ENCODE measurements at regions of chr1 and their contacts with region 1.

Region 1: GRCh38 chr1:172753964-172754363 is 95.1 kb downstream of the FASLG start:
- DNase-seq: no peak
- ATAC-seq: no peak
- H3K4me3 ChIP-seq: no peak overlapping the region
- H3K27ac ChIP-seq: no peak overlapping the region
- H3K4me1 ChIP-seq: no peaks in the 10 kb centered on the region
- H3K27me3 ChIP-seq: peaks cover 13% of the 10 kb centered on the region; the same call in 1 of the 2 replicates
- CTCF ChIP-seq: no peak
- POLR2A ChIP-seq: no peak
- RAD21 ChIP-seq: no peak

Region 2: DNA sequence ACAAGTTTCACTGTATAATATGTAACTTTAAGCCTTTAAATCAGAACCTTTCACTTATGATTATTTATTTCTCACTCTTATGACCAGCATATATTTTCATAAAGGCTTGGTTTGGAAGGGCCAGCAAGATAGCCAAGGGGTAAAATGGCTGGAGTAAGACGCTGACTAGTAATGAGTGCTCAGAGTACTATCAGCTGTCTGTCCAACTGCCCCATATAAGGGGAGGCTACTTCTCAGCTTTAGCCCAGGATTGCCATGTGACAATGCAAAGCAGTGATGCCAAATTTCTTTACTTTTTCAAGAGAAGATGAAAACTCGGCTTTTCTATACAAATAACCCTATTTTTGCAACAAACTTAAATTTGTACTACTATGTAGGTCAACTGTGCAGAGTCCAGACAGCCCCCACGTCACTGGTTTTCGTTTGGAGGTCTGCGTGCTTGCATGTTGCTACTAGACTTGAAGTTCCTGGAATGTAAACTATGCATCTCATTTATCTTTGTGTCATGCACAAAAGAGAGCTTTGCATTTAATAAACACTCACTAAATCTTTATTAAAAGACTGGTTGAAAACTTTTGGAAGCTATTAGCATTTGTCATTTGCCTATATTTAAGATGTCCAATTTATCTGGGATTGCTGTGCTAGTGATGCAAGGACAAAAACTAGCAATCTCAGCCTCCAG is 186.4 kb after region 1 on chr1:
- CTCF ChIA-PET with region 1: interaction called, 10 read pairs
- POLR2A ChIA-PET with region 1: no interaction called
- dilution Hi-C with region 1: no loop called
- in situ Hi-C with region 1: no loop called
- intact Hi-C with region 1: no loop called
- DNase-seq: peak; percentile 90
- ATAC-seq: peak; percentile 73
- H3K4me3 ChIP-seq: no peak overlapping the region
- H3K27ac ChIP-seq: peak overlapping the region; percentile 90
- H3K4me1 ChIP-seq: peaks cover 18% of the 10 kb centered on the region
- H3K27me3 ChIP-seq: no peaks in the 10 kb centered on the region
- CTCF ChIP-seq: no peak
- POLR2A ChIP-seq: no peak
- RAD21 ChIP-seq: no peak